ENCODE measurements at regions of chr16 and their contacts with region 1.

Region 1: DNA sequence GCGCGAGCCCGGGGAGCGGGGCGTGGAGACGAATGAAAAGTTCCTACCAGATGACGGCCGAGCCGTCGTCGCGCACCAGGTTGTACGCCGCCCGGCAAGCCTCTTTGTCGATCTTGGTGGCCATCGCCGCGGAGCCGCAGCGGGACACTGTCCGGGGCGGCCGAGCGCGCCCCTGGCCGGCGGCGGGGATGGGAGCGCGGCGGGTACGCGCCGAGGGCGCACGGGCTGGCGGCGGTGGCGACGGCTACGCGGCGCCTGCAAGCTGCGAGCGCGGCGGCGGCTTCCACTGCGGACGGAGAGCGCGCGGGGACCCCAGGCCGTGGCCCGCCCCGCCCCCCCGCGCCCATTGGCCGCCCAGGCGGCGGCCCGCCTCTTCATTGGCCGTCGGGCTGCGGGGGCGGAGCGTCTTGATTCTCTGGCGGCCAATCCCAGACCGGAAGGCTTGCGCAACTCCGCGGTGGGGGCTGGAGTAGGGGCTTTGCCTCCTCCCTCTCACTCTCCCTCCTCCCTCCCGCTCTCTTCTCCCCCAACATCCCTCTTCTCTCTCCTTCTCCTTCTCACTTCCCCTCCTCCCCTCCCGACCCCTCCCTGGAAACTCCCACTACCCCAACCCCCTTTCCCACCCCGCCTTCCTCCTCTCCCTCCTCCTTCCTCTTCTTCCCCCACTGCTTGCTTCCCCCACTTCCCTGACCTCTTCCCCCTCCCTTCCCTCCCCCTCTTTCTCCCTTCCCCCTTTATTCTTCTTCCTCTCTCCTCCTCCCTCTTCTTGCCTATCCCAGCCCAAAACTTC is at the start of gene COTL1:
- DNase-seq: peak; percentile 97
- H3K4me3 ChIP-seq: peak within 1 kb of the TSS; percentile 99
- H3K27ac ChIP-seq: peak within 1 kb of the TSS; percentile 52
- H3K4me1 ChIP-seq: peaks cover 67% of the 10 kb centered on the region
- CTCF ChIP-seq: no peak
- total RNA-seq, gene COTL1: 119 and 125 TPM in 2 replicates

Region 2: DNA sequence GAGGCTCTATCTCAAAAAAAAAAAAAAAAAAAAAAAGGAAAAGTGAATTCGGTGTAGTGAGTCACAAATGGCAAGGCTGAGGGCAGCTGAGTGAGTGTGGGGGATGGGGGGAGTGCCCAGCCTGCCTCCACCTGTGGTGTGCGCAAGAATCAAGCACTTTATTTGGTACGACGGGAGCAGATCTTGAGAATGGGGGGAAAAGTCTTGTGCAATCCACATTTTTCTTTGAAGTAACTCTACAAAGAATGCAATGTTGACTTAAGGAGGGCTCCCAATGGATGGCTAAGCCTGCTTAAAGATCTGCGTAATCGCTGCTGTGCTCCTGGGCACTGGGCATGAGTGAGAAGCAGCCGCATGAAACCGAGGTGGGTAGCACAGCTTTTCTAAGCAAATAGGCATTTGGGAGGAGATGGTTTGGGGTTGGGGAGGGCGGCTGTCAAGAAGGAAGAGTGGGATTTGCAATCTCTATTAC is 221.4 kb before region 1 on chr16:
- CTCF ChIA-PET with region 1: no interaction called
- POLR2A ChIA-PET with region 1: no interaction called
- intact Hi-C with region 1: no loop called
- DNase-seq: no peak
- H3K4me3 ChIP-seq: no peak overlapping the region
- H3K27ac ChIP-seq: no peak overlapping the region
- H3K4me1 ChIP-seq: no peaks in the 10 kb centered on the region
- CTCF ChIP-seq: no peak

Region 3: GRCh38 chr16:84511180-84511824 is 106.7 kb before region 1 on chr16:
- CTCF ChIA-PET with region 1: interaction called, 9 read pairs
- POLR2A ChIA-PET with region 1: interaction called, 7 read pairs
- intact Hi-C with region 1: loop called (anchors 1 kb)
- DNase-seq: peak; percentile 86
- H3K4me3 ChIP-seq: peak overlapping the region; percentile 50
- H3K27ac ChIP-seq: no peak overlapping the region
- H3K4me1 ChIP-seq: peaks cover 59% of the 10 kb centered on the region
- CTCF ChIP-seq: peak; percentile 98

Region 4: GRCh38 chr16:84599521-84600202 is 18.3 kb before region 1 on chr16:
- CTCF ChIA-PET with region 1: no interaction called
- POLR2A ChIA-PET with region 1: interaction called, 50 read pairs
- intact Hi-C with region 1: loop called (anchors 1 kb)
- DNase-seq: peak; percentile 71
- H3K4me3 ChIP-seq: peak overlapping the region; percentile 60
- H3K27ac ChIP-seq: peak overlapping the region; percentile 97
- H3K4me1 ChIP-seq: peaks cover 93% of the 10 kb centered on the region
- CTCF ChIP-seq: no peak

Region 5: DNA sequence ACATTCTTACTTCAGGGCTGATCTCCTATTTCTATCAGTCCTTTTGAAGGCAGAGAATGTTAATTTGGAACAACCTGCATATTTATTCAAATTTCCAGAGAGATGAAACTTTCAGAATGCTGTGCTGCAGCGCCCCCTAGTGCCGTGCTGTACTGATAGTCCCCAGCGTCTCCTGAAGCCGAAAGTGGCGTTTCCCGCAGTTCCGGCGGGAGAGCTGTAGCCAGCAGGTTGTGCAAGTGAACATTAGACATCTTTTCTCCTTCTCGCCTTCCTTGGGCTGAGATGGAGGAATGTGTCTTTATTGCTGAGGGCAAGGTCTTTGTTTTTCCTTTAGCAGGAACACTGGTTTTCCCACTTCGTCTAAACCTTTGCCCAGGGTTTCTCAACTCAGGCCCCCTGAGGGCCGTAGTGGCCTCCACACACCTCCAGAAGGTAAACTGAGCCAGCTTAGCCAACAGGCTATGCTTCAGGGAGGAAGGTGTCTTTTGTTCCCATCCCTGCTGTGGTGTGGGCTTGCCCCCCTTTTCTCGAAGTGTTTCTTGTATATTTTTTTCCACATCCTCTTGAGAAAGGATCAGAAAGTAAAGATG is 108.2 kb after region 1 on chr16:
- CTCF ChIA-PET with region 1: interaction called, 5 read pairs
- POLR2A ChIA-PET with region 1: interaction called, 7 read pairs
- intact Hi-C with region 1: loop called (anchors 1 kb)
- DNase-seq: peak; percentile 84
- H3K4me3 ChIP-seq: peak overlapping the region; percentile 57
- H3K27ac ChIP-seq: peak overlapping the region; percentile 56
- H3K4me1 ChIP-seq: peaks cover 80% of the 10 kb centered on the region
- CTCF ChIP-seq: peak; percentile 100

Region 6: GRCh38 chr16:84952335-84953189 is 334.6 kb after region 1 on chr16:
- CTCF ChIA-PET with region 1: no interaction called
- POLR2A ChIA-PET with region 1: no interaction called
- intact Hi-C with region 1: loop called (anchors 5 kb)
- DNase-seq: peak; percentile 80
- H3K4me3 ChIP-seq: no peak overlapping the region
- H3K27ac ChIP-seq: no peak overlapping the region
- H3K4me1 ChIP-seq: no peaks in the 10 kb centered on the region
- CTCF ChIP-seq: peak; percentile 89